CD8-positive, alpha-beta memory T cell (primary cell): ENCODE measurements at regions of chr4 and their contacts with region 1.

Region 1: DNA sequence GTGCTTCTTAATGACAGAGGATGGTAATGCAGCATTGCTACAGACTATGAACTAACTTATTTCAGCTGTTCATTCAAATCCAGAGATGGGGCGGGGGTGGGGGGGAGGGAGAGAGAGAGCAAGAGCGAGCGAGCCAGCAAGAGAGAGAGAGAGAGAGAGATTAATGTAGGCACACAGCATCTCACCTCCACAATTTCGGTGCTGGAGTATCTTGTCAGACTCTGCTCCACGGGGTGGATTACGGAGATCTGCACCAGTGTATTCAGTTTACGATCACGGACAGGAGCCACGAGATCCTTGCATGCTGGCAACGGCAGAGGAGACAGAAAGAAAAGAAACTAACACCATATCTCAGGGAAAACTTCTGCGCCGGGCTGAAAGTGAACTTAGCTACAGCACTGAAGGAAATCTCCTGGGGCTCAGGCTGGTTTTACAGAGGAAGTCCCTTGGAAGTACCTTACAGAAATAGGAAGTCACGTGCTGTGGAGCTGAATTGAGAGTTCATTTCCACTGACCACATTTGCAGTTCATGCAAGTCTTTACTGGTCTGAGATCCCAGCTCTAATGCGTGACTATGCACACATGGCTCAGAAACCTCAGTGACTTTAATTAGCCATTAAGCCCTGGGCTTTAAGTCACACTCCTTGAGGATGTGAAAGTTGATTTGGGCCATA is 440.9 kb downstream of the INPP4B start:
- DNase-seq: peak; percentile 21 to 64 (median 55)
- H3K4me3 ChIP-seq: peak overlapping the region; percentile 71
- H3K4me3 Mint-ChIP-seq: peak overlapping the region; percentile 93 to 100 (median 98)
- H3K27ac ChIP-seq: peak overlapping the region; percentile 51
- H3K27ac Mint-ChIP-seq: peak overlapping the region; percentile 81 to 98 (median 97)
- H3K4me1 ChIP-seq: peaks cover 59% of the 10 kb centered on the region
- H3K4me1 Mint-ChIP-seq: peaks cover 60 to 73% (median 66%) of the 10 kb centered on the region in 3 donors
- H3K27me3 ChIP-seq: no peaks in the 10 kb centered on the region
- H3K27me3 Mint-ChIP-seq: no peaks in the 10 kb centered on the region

Region 2: GRCh38 chr4:142416711-142417275 is 11.6 kb after region 1 on chr4:
- CTCF ChIA-PET with region 1: interaction called, 15 read pairs
- POLR2A ChIA-PET with region 1: interaction called, 19 read pairs
- DNase-seq: peak in 2 of 5 donors; percentile 21 to 34
- H3K4me3 ChIP-seq: peak overlapping the region; percentile 39
- H3K4me3 Mint-ChIP-seq: peak overlapping the region; percentile 21 to 77 (median 69)
- H3K27ac ChIP-seq: peak overlapping the region; percentile 14
- H3K27ac Mint-ChIP-seq: peak overlapping the region; percentile 54 to 97 (median 90)
- H3K4me1 ChIP-seq: peaks cover 42% of the 10 kb centered on the region
- H3K4me1 Mint-ChIP-seq: peaks cover 22 to 40% (median 37%) of the 10 kb centered on the region in 3 donors
- H3K27me3 ChIP-seq: no peaks in the 10 kb centered on the region
- H3K27me3 Mint-ChIP-seq: no peaks in the 10 kb centered on the region